Mammary epithelial cell (primary cell): ENCODE measurements at regions of chr7 and their contacts with region 1.

Region 1: DNA sequence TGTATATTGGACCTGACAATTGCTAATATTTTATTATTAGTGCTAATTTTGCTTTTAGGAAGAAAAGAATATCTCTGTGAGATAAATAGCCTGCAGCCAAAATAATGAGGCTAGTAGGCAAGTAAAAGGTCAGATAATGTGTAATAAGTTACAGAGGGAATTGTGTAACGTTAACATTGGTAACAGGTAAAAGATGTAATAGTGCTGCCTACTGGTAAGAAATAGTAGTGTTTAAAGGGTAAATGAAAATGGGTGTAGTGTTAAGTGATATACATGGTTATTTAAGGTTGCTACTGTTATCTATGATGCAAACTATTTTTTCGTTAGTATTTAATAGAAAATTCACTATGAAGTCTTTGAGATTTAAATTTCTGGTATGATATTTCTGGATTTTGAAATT is 9.2 kb upstream of the FOXP2 start:
- DNase-seq: peak; percentile 32
- H3K4me3 ChIP-seq: no peak overlapping the region
- H3K27ac ChIP-seq: no peak overlapping the region
- H3K4me1 ChIP-seq: no peaks in the 10 kb centered on the region
- H3K27me3 ChIP-seq: no peaks in the 10 kb centered on the region
- CTCF ChIP-seq: peak; percentile 66 to 71

Region 2: GRCh38 chr7:114217026-114217425 is 188.4 kb before region 1 on chr7:
- CTCF ChIA-PET with region 1: no interaction called
- dilution Hi-C with region 1: no loop called
- in situ Hi-C with region 1: no loop called
- intact Hi-C with region 1: loop called (anchors 5 kb)
- DNase-seq: no peak
- H3K4me3 ChIP-seq: no peak overlapping the region
- H3K27ac ChIP-seq: no peak overlapping the region
- H3K4me1 ChIP-seq: no peaks in the 10 kb centered on the region
- H3K27me3 ChIP-seq: no peaks in the 10 kb centered on the region
- CTCF ChIP-seq: peak; percentile 7 to 39

Region 3: DNA sequence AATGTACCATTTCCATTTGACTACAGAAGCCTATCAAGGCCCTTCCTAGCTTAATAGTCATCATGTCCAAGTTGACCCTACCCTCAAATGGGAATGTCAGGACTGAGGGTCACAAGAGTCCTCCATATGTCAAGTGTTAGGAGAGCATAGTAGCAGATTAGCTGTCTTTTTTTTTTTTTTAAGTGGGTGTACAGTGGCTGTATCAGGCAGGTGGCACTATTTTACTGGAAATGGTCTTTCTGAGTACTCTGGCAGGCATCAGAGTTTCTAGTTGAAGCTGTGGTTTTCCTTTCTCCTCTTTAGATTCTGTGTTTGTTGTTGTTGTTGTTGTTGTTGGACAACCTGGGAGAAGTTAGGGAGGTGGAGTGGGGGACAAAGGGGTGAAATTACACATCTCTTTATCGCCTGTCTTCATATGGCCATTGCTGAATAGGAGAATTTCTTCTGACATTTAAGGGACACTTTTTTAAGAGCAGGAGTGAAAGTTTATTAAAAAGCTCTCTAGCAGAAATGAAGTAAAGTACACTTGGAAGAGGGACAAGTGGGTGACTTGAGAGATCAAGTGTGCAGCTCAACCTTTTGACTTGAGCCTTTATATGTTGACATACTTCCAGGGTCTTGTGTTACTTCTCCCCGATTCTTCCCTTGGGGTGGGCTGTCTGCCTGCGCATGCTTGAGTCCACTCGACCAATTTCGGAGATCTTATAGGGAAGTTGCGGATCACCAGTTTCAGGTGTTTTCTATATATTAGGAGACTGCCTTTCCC is 94.9 kb before region 1 on chr7:
- CTCF ChIA-PET with region 1: interaction called, 9 read pairs
- dilution Hi-C with region 1: no loop called
- in situ Hi-C with region 1: no loop called
- intact Hi-C with region 1: loop called (anchors 2 kb)
- DNase-seq: no peak
- H3K4me3 ChIP-seq: no peak overlapping the region
- H3K27ac ChIP-seq: no peak overlapping the region
- H3K4me1 ChIP-seq: no peaks in the 10 kb centered on the region
- H3K27me3 ChIP-seq: no peaks in the 10 kb centered on the region
- CTCF ChIP-seq: peak in 1 of 2 donors; percentile 26

Region 4: DNA sequence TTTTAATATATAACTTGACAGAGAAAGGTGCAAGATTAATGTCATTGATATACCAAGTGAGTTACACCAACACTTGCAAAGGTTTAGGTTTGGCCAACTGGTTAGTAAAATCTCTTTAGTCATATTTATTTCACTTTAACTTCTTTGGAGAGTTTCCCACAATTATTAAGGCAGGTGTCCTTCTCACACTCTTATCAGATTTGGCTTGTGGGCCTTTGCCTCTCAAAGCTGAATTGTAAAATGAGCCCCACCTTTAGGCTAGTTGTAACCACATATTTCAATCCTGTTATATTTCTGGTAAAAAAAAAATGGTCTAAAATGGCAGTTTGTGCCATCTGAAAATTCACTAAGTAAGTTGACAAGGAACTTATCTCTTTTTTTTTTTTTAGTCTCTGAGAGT is 17.4 kb before region 1 on chr7:
- CTCF ChIA-PET with region 1: no interaction called
- dilution Hi-C with region 1: no loop called
- in situ Hi-C with region 1: no loop called
- intact Hi-C with region 1: no loop called
- DNase-seq: no peak
- H3K4me3 ChIP-seq: no peak overlapping the region
- H3K27ac ChIP-seq: no peak overlapping the region
- H3K4me1 ChIP-seq: no peaks in the 10 kb centered on the region
- H3K27me3 ChIP-seq: no peaks in the 10 kb centered on the region
- CTCF ChIP-seq: no peak